Activated CD4-positive, alpha-beta T cell treated with anti-CD3 and anti-CD28 coated beads for 36 hours (primary cell): ENCODE measurements at regions of chr6 and their contacts with region 1.

Region 1: DNA sequence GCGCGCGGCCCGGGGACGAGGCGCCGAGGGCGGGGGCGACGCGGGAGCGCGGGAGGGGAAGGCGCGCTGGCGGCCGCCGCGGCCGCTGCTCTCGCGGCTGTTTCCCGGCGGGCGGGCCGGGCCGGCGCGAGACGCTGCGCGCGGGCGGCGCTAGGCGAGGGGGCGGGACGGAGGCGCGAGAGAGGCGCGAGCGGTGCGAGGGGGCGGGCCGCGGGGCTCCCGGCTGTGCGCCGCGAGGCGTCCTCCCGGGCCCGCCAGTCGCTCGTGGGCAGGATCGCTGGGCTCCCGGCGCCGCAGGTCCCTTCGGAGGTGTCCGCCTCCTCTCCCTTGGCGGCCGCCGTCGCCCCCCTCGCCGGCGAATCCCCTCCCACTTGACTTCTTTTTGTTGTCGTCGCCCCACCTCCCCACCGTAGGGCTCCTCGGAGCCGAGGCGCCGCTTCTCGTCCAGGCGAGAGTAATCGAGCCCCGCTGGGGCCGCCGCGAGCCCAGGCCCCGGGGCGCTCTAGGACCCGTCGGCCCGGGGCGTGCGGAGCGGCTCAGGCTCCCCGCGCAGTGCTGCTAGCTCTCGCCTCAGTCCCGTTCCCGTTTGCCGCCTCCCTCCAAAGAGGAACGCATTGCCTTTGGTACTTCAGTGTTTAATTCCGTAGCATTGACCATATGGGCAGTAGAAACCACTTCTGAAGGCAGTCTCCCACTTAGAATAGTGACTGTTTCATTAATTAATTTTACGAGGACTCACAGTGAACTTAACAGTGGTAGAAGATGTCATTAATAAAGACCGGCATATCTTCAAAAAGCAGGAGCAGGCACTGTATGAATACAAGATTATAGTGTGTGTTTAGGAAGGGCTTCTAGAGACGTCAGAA is at the start of gene RANBP9:
- DNase-seq: peak; percentile 92
- ATAC-seq: peak; percentile 78
- H3K4me3 Mint-ChIP-seq: peak within 1 kb of the TSS; percentile 85
- H3K27ac Mint-ChIP-seq: peak within 1 kb of the TSS; percentile 96
- H3K4me1 Mint-ChIP-seq: peaks cover 49% of the 10 kb centered on the region
- H3K27me3 Mint-ChIP-seq: no peaks in the 10 kb centered on the region
- total RNA-seq, gene RANBP9: 50.8 to 65.0 TPM

Region 2: DNA sequence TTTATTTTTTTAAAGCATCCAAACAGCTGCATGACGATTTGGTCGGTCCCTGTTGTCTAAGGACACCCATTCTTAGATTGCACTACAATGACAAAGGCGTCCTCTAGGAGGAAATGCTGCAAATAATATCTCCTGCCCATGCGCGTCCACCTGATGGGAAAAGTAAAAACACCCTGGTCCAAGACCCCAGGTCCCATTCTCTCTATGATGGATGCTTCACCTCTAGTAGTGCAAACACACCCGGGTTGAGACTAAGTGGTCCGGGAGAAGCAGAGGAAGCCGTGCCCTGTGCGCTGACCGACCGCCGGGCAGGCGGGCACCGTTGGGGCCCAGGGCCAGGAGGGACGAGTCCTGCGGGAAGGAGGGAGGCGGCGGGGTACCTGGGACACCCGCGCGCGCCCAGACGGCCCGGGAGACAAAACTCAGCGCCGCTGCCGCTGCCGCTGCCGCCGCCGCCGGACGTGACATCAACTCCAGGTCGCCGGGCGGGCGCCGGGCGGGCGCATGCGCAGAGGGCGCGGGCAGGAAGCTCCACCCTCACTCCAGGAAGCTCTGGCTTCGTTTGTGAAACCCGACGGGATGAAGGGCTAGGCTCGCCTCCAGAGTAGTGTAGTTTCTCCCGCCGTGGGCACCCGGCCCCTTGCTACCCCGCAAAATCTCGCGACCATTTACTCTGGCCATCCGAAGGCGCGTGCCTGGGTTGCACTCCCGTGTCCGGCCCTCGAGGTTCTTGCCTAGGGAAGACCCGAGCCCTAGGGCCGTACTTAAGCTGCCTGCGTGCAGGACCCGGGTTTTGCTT is 383.7 kb before region 1 on chr6 and contains the start of gene TBC1D7:
- CTCF ChIA-PET with region 1: no interaction called
- POLR2A ChIA-PET with region 1: no interaction called
- intact Hi-C with region 1: loop called in 1 of 2 experiments (anchors 2 kb)
- DNase-seq: peak; percentile 96
- ATAC-seq: peak; percentile 91
- H3K4me3 Mint-ChIP-seq: peak within 1 kb of the TSS; percentile 88
- H3K27ac Mint-ChIP-seq: peak within 1 kb of the TSS; percentile 95
- H3K4me1 Mint-ChIP-seq: peaks cover 17% of the 10 kb centered on the region
- H3K27me3 Mint-ChIP-seq: no peaks in the 10 kb centered on the region
- total RNA-seq, gene TBC1D7: 13.8 to 16.4 TPM

Region 3: DNA sequence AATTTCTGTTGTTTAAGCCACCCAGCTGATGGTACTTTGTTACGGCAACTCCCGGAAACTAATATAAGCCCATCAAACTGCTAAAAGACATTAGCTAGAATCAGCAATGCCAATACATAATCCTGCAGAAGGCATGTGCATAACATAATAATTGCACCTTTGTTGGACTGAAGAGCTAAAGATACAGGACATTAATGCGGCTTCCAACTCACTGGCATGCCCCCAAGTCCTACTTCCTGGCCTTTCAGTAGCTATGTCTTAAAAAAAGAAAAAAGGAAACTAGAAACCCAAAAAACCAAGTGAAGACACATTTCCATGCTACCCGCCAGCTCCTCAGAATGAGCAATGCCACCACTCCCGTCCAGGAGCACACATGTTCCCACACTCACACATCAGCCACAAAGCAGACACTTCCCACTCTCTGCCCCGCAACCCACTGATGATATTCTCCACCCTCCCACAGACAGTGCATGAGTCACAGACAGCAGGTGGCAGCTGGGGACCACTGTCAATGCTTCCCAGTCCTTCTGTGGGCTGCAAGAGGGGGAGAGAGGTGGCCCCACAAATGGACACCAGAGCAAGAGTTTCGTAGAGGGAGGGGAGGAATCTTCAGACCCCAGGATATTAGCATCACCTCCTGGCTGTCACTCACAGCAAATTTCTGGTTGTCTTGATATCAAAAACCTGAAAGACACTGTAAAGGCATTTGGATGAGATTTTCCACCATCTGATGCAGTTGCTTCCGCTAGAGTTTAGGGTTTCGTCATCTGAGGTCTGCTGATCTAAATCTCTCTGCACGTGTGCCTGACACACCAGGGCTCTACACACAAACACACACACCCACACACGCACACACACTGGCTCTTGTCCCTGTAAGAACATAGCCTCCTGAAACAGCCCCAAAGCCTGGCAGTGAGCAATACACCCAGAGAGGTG is 257.4 kb before region 1 on chr6:
- CTCF ChIA-PET with region 1: no interaction called
- POLR2A ChIA-PET with region 1: no interaction called
- intact Hi-C with region 1: loop called in 1 of 2 experiments (anchors 1 kb)
- DNase-seq: peak; percentile 88
- ATAC-seq: peak; percentile 66
- H3K4me3 Mint-ChIP-seq: peak overlapping the region; percentile 36
- H3K27ac Mint-ChIP-seq: peak overlapping the region; percentile 95
- H3K4me1 Mint-ChIP-seq: peaks cover 63% of the 10 kb centered on the region
- H3K27me3 Mint-ChIP-seq: no peaks in the 10 kb centered on the region

Region 4: GRCh38 chr6:13574149-13574570 is 137.8 kb before region 1 on chr6:
- CTCF ChIA-PET with region 1: interaction called, 7 read pairs
- POLR2A ChIA-PET with region 1: interaction called, 6 read pairs
- intact Hi-C with region 1: loop called in 1 of 2 experiments (anchors 1 kb)
- DNase-seq: peak; percentile 95
- ATAC-seq: peak; percentile 80
- H3K4me3 Mint-ChIP-seq: peak overlapping the region; percentile 94
- H3K27ac Mint-ChIP-seq: peak overlapping the region; percentile 100
- H3K4me1 Mint-ChIP-seq: peaks cover 22% of the 10 kb centered on the region
- H3K27me3 Mint-ChIP-seq: no peaks in the 10 kb centered on the region

Region 5: DNA sequence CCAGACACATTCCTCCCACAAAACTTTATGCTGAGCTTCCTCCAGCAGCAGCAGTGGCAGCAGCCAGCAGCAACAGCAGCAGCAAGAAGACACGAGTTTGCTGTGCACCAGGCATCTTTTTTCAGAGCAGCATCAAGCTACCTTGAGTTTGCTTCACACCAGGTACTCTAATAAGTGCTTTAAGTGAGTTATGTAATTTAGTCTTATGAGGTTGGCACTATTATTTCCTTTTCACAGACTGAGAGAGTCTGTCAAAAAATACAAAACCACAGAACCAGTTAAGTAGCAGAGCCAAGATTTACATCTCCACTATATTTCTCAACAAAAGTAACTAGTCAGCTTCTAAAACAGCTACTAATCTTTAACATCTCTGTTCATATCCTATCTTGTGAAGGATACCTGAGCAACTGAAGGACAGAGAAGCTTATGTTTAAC is 24.0 kb before region 1 on chr6:
- CTCF ChIA-PET with region 1: interaction called, 4 read pairs
- POLR2A ChIA-PET with region 1: no interaction called
- intact Hi-C with region 1: loop called in 1 of 2 experiments (anchors 2 kb)
- DNase-seq: no peak
- ATAC-seq: peak; percentile 11
- H3K4me3 Mint-ChIP-seq: no peak overlapping the region
- H3K27ac Mint-ChIP-seq: peak overlapping the region; percentile 66
- H3K4me1 Mint-ChIP-seq: peaks cover 68% of the 10 kb centered on the region
- H3K27me3 Mint-ChIP-seq: no peaks in the 10 kb centered on the region

Region 6: DNA sequence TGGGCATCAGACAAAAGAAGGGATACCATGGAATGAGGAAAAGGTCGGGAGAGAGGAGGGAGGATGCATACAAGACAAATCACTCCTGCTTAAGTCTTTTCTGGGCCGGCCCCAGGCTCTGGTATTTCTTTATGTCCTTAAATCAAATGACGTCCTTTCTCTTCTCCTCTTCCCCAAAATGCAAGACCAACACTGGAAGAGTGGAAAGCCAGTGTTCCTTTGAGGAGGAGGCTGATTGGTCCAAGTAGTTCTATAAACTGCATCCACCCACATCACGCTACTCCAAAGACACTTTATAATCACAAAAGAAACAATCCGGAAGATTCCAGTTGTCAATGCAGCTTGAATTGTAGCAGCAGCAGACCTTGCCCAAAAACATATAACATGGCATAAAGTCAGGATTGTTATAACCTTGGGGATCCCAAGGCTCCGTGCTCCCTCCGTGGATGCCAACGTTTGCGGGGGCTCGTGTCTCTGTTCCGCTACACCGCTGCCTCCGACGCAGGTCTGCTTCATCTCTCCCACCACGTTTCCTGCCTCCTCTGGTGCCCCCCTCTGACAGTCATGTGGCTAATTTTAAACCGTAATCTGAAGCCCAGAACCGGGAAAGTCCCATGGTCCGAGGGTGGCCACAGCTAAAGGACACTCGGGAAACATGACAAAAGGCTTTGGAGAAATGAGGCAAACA is 55.3 kb after region 1 on chr6:
- CTCF ChIA-PET with region 1: interaction called, 3 read pairs
- POLR2A ChIA-PET with region 1: interaction called, 4 read pairs
- intact Hi-C with region 1: loop called (anchors 1 kb)
- DNase-seq: peak; percentile 47
- ATAC-seq: no peak
- H3K4me3 Mint-ChIP-seq: peak overlapping the region; percentile 63
- H3K27ac Mint-ChIP-seq: peak overlapping the region; percentile 65
- H3K4me1 Mint-ChIP-seq: peaks cover 40% of the 10 kb centered on the region
- H3K27me3 Mint-ChIP-seq: no peaks in the 10 kb centered on the region

Region 7: DNA sequence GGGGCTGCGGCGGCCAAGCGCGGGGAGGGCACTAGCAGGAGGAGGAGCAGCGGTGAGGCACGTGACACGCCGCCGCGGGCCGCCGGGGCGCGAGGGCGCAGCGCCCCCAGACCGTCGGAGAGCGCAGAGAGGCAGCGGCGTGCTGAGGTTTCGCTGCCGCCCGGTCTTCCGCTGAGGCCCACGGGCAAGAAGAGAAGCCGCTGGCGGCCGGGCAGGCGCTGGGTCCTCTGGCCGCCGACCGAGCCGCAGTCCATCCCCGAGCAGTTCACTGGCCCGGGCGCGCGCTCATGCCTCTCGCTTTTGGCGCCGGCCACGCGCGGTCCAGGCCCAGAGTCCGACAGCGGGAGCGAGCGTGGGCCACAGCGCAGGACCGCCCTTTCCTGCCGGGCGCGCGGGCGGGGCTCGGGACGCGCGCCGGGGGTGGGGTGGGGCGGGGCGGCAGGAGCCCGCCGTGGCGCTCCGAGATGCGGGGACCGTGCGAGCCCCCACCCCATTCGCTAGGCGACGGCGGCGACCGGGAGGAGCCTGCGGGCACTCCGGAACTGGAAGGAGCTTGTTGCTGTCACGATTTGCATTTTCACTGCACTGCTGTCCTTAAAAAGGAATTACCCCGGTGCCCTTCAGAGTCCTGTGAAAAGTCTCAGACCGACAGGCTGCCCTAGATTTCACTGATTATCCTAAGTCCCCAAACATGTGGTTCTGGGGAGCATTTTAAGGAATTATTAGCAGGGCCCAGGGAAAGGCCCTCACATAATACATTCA is 102.4 kb after region 1 on chr6 and contains the start of gene MCUR1:
- CTCF ChIA-PET with region 1: interaction called, 3 read pairs
- POLR2A ChIA-PET with region 1: interaction called, 3 read pairs
- intact Hi-C with region 1: loop called (anchors 1 to 5 kb)
- DNase-seq: peak; percentile 92
- ATAC-seq: peak; percentile 87
- H3K4me3 Mint-ChIP-seq: peak within 1 kb of the TSS; percentile 85
- H3K27ac Mint-ChIP-seq: peak within 1 kb of the TSS; percentile 87
- H3K4me1 Mint-ChIP-seq: peaks cover 27% of the 10 kb centered on the region
- H3K27me3 Mint-ChIP-seq: no peaks in the 10 kb centered on the region
- total RNA-seq, gene MCUR1: 37.9 to 59.3 TPM

Region 8: GRCh38 chr6:13908955-13909381 is 197.0 kb after region 1 on chr6:
- CTCF ChIA-PET with region 1: no interaction called
- POLR2A ChIA-PET with region 1: no interaction called
- intact Hi-C with region 1: no loop called
- DNase-seq: peak; percentile 63
- ATAC-seq: peak; percentile 74
- H3K4me3 Mint-ChIP-seq: no peak overlapping the region
- H3K27ac Mint-ChIP-seq: no peak overlapping the region
- H3K4me1 Mint-ChIP-seq: peaks cover 2% of the 10 kb centered on the region
- H3K27me3 Mint-ChIP-seq: peaks cover 28% of the 10 kb centered on the region

Region 9: DNA sequence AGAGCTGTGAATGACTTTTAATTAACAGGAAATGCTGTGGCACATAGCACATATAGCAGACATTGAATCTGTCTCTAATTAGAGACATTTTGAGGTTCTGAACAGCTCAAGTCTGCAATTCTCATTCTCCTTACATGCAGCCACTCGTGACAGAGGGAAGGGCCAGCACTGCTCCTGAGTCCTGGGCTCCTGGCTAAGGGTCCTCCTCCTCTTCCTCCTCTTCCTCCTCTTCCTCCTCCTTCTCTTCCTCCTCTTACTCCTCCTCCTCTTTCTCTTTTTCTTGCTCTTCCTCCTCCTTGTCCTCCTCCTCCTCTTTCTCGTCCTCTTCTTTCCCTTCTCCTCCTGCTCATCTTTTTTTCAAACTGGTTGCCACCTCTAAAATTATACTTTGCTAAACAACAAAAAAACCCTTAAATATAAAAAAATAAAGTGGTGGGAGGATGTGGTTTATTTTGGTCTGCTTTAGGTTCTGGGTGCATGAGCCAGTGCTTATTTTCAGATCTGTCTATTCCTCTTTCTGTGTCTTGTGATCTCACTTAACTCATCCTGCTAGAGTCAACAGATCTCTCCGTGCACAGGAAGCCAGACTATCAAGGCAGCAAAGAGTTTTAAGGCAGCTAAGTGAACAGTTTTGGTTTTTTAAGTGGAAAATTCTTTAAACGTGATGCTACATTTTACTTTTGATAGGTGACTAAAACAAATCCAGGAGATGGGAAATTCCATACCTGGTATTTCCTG is 564.9 kb after region 1 on chr6:
- CTCF ChIA-PET with region 1: no interaction called
- POLR2A ChIA-PET with region 1: no interaction called
- intact Hi-C with region 1: no loop called
- DNase-seq: peak; percentile 39
- ATAC-seq: peak; percentile 92
- H3K4me3 Mint-ChIP-seq: peak overlapping the region; percentile 25
- H3K27ac Mint-ChIP-seq: peak overlapping the region; percentile 96
- H3K4me1 Mint-ChIP-seq: peaks cover 50% of the 10 kb centered on the region
- H3K27me3 Mint-ChIP-seq: no peaks in the 10 kb centered on the region

Region 10: GRCh38 chr6:14559754-14560536 is 848.0 kb after region 1 on chr6:
- CTCF ChIA-PET with region 1: no interaction called
- POLR2A ChIA-PET with region 1: no interaction called
- intact Hi-C with region 1: no loop called
- DNase-seq: no peak
- ATAC-seq: no peak
- H3K4me3 Mint-ChIP-seq: no peak overlapping the region
- H3K27ac Mint-ChIP-seq: no peak overlapping the region
- H3K4me1 Mint-ChIP-seq: no peaks in the 10 kb centered on the region
- H3K27me3 Mint-ChIP-seq: no peaks in the 10 kb centered on the region